CD14-positive monocyte (primary cell): ENCODE measurements at regions of chr3 and their contacts with region 1.

Region 1: GRCh38 chr3:45123030-45123429 is 23.1 kb downstream of the CDCP1 start:
- DNase-seq: peak; percentile 67 to 84 (median 83)
- H3K4me3 ChIP-seq: no peak overlapping the region
- H3K4me3 Mint-ChIP-seq: no peak overlapping the region
- H3K27ac ChIP-seq: peak overlapping the region in 1 of 2 donors; percentile 73
- H3K27ac Mint-ChIP-seq: peak overlapping the region in 6 of 7 donors; percentile 47 to 87 (median 80)
- H3K4me1 ChIP-seq: peaks cover 11 to 38% of the 10 kb centered on the region in 2 donors
- H3K4me1 Mint-ChIP-seq: peaks cover 47% of the 10 kb centered on the region
- H3K27me3 ChIP-seq: no peaks in the 10 kb centered on the region
- H3K27me3 Mint-ChIP-seq: peaks cover 0 to 3% (median 1%) of the 10 kb centered on the region in 3 donors
- CTCF ChIP-seq: no peak

Region 2: DNA sequence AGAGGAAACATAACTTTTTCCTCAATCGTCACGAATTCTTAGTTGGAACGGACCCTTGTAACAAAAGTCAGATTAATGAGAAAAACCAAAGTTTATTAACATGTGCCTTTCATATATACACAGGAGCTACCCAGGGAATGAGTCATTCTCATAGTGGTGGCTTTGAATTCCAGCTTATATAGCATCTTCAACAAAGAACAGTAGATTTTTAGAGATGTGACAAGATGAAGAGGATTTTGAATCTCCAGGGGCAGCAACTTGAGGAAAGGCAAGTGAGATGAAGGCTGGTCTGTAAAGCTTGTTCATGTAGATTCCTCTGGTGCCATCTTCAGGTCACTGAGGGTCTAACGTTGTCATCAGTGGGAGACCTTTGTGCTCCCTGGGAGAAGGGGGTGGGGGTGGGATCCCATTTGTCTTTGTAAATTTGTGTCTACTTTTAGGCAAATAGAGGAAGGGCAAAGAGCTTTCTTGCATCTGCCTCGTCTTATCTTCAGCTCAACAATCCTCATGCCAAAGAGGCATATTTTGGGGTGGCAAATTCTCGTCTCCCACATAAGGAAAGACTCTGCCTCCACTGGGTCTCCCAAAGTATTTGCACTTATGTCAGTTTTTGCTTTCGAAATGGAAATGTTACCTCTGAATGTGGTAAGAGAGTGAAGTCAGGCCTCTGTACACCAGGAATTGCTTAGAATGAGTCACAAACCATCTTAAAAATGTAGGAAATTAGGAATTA is 67.5 kb before region 1 on chr3:
- intact Hi-C with region 1: loop called (anchors 5 to 10 kb)
- DNase-seq: peak in 2 of 3 donors; percentile 48 to 56
- H3K4me3 ChIP-seq: peak overlapping the region in 1 of 3 experiments; percentile 27
- H3K4me3 Mint-ChIP-seq: peak overlapping the region in 1 of 2 donors; percentile 2
- H3K27ac ChIP-seq: peak overlapping the region; percentile 26 to 82
- H3K27ac Mint-ChIP-seq: peak overlapping the region; percentile 88 to 97 (median 93)
- H3K4me1 ChIP-seq: peaks cover 49 to 62% of the 10 kb centered on the region in 2 donors
- H3K4me1 Mint-ChIP-seq: peaks cover 57% of the 10 kb centered on the region
- H3K27me3 ChIP-seq: no peaks in the 10 kb centered on the region
- H3K27me3 Mint-ChIP-seq: peaks cover 0 to 2% (median 2%) of the 10 kb centered on the region in 3 donors
- CTCF ChIP-seq: peak; percentile 9